Activated T-helper 1 cell treated with anti-CD3 and anti-CD28 coated beads, Interleukin-12 subunit alpha, Interleukin-12 subunit beta, Interleukin-2, Interleukin-4 antibody, amounts not matched to agents 30 ng/mL and 10 ng/mL and 1 ng/mL, durations not matched to agents 14 hours and 24 hours and 36 hours (primary cell): ENCODE measurements at regions of chr15 and their contacts with region 1.

Region 1: GRCh38 chr15:78437762-78438302 is at the start of gene IREB2:
- DNase-seq: peak; percentile 98
- H3K4me3 Mint-ChIP-seq: peak within 1 kb of the TSS; percentile 90
- H3K27ac Mint-ChIP-seq: peak within 1 kb of the TSS; percentile 96
- H3K4me1 Mint-ChIP-seq: peaks cover 38% of the 10 kb centered on the region
- H3K27me3 Mint-ChIP-seq: peaks cover 4% of the 10 kb centered on the region
- total RNA-seq, gene IREB2: 98.0 and 103 TPM in 2 replicates

Region 2: GRCh38 chr15:76931397-76932007 is 1506.3 kb before region 1 on chr15 and contains the start of gene RCN2:
- intact Hi-C with region 1: loop called (anchors 5 kb)
- DNase-seq: peak; percentile 93
- H3K4me3 Mint-ChIP-seq: peak within 1 kb of the TSS; percentile 92
- H3K27ac Mint-ChIP-seq: peak within 1 kb of the TSS; percentile 84
- H3K4me1 Mint-ChIP-seq: peaks cover 44% of the 10 kb centered on the region
- H3K27me3 Mint-ChIP-seq: peaks cover 5% of the 10 kb centered on the region
- total RNA-seq, gene RCN2: 39.9 and 42.2 TPM in 2 replicates

Region 3: DNA sequence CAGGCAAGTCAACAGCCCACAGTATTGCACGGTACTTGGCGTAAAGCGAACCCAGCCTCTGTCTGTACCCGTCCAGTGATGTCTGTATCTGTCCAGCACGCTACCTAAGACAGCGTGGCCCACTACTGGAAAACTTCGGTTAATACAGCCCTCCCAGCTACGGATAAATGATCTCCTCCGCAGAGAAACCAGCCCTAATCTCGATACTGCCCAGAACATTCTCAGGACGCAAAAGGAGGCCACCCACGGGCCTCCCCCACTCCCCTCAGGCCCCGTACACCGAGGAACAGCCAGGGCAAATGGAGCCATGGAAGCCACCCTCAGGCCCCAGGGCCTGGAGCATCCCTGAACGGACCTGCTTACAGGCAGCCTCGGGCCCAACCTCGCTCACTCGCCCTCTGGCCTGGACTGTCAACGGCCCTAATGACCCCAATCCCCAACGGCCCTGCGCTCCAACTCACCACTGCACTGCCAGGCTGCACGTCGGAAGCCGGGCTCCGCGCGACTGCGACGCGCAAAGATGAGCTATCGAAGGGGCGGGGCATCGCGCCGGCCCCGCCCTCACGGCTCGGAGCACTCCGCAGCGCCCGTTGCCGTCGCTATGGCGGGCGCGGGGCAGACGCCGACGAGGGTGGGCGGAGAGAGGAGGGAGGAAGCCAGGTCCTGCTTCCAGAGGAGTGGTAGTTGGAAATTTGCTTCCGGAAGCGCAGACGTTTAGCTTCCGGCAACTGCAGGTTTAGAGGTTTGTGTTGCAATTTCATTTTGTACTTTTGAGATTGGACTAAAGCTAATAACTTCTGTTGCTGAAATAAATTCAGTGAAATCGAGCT is 138.5 kb before region 1 on chr15 and contains the start of gene SKIC8:
- intact Hi-C with region 1: loop called (anchors 1 kb)
- DNase-seq: peak; percentile 90
- H3K4me3 Mint-ChIP-seq: peak within 1 kb of the TSS; percentile 96
- H3K27ac Mint-ChIP-seq: peak within 1 kb of the TSS; percentile 94
- H3K4me1 Mint-ChIP-seq: peaks cover 31% of the 10 kb centered on the region
- H3K27me3 Mint-ChIP-seq: peaks cover 3% of the 10 kb centered on the region
- total RNA-seq, gene SKIC8: 54.3 and 57.3 TPM in 2 replicates

Region 4: DNA sequence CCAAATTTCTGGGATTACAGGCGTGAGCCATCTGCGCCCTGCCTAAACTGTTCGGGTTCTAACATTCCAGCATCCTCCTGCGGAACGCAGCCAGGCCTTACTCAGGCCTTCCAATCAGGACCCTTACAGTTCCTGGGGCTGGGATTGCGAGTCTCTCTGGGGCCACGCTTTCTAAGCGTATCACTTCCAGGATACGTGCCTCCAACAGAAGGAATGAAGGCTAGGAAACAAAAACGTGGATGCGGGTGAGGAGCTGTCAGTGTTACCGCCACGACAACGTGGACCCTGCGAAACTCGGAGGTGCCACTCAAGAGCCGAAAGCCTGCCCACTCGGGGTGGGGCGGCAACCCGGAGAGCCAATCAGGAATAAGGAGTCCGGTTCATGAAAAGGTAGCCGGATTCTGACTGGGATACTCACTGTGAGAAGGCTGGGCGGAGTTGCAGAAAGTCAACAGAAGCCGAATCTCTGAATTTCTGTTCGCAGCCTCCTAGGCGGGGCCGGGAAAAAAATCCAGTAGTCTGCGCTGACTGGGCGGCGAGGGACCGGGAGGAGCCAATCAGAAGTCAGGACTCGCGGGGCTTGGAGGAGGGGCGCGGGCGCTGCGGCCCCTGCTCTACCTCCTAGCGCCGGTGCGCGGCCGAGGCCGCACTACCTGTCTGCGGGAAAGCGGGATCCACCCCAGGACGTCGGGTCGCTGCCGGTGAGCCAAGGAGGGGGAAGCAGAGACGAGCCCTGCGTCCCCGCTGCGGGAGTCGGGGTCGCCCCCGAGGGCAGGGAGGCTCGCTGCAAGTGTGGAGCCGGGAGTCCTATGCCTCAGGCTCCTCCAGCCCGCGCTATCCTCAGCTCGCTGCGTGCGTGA is 69.4 kb after region 1 on chr15 and contains the start of gene HYKK:
- intact Hi-C with region 1: loop called (anchors 1 kb)
- DNase-seq: peak; percentile 77
- H3K4me3 Mint-ChIP-seq: peak within 1 kb of the TSS; percentile 85
- H3K27ac Mint-ChIP-seq: no peak within 1 kb of the TSS
- H3K4me1 Mint-ChIP-seq: peaks cover 31% of the 10 kb centered on the region
- H3K27me3 Mint-ChIP-seq: peaks cover 9% of the 10 kb centered on the region
- total RNA-seq, gene HYKK: 1.2 and 1.4 TPM in 2 replicates

Region 5: DNA sequence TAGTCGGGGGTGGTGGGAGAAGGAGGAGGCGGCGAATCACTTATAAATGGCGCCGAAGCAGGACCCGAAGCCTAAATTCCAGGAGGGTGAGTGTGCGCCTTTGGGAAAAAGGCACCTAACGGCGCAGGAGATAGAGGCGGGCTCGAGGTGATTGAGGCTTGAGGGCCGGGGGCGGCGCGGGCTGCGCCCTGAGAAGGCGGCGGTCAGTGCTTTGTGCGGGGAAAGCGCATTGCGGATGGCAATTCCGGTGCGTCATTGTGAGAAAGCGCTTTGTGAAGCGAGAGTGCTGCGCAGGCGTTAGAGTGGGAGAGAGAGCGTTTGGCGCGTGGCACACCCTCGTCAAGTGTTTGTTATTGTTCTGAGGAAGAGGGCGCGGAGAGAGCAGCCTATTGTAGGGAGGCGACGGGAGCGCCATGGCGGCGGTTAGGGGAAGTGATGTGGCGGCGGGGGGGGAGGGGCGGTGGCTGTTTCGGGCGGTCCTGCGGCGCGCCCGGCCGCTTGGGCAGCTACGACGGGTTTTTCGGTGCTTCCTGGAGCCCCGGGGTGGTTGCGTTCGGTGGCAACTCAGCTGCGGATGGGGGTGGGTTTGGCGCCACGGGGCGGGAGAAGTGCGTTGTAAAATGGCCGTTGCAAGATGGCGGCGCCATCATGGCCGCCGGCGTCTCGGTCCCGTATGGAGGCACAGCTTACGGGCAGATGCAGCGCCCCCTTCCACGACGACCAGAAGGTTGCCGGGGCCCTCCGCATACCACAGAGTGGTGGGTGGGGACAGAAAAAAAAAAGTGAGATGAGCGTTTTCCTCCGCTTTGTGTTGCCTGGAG is 435.4 kb after region 1 on chr15:
- intact Hi-C with region 1: loop called (anchors 1 kb)
- DNase-seq: peak; percentile 87
- H3K4me3 Mint-ChIP-seq: peak overlapping the region; percentile 93
- H3K27ac Mint-ChIP-seq: peak overlapping the region; percentile 98
- H3K4me1 Mint-ChIP-seq: peaks cover 47% of the 10 kb centered on the region
- H3K27me3 Mint-ChIP-seq: no peaks in the 10 kb centered on the region